ENCODE measurements at regions of chr5 and their contacts with region 1.

Region 1: DNA sequence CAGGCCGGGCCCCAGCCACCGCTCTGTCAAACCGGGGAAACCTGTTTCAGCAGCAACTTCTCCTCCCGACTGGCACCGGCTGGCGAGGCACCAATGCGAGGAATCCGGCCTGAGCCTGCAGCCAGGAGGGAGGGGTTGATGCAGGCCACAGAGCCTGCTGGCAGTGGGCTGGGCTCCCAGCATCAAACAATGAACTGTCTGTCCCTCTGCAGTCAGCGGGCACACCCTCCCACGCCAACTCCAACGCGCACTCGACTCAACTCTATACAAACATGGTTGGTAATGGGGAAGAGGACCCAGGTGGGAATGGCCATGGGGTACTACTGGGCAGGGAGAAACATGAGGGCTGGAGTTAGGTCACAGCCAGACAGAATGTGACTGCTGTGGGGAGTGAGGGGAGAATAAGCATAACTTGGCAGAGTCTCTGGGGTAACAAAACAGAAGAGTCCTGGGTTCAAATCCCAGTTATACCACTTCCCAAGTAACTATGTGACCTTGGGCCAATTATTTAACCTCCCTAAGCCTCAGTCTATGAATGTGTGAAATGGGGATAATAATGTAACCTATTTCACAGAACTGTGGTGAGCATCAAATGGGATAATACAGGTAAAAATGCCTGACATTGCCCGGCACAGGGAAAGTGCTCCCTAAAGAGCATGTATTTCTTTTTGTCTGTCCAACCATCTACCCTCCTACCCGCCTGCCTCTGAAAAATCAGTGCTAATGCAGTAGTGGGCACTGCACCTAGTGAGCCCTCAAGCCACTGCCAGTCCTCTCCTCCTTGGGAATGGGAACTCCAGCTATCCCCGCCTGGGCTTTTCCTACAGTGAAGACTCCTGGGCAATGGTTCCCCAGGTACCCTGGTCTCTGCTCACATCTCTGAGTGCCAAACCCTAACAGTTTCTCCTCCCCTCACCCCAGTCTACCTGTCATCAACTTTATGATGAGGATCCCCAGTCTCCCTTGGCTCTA is 11.8 kb downstream of the PCDH1 start:
- DNase-seq: peak; percentile 93
- ATAC-seq: peak; percentile 89
- H3K4me3 ChIP-seq: no peak overlapping the region
- H3K27ac ChIP-seq: peak overlapping the region; percentile 95
- H3K4me1 ChIP-seq: peaks cover 40% of the 10 kb centered on the region
- H3K27me3 ChIP-seq: no peaks in the 10 kb centered on the region
- CTCF ChIP-seq: no peak

Region 2: DNA sequence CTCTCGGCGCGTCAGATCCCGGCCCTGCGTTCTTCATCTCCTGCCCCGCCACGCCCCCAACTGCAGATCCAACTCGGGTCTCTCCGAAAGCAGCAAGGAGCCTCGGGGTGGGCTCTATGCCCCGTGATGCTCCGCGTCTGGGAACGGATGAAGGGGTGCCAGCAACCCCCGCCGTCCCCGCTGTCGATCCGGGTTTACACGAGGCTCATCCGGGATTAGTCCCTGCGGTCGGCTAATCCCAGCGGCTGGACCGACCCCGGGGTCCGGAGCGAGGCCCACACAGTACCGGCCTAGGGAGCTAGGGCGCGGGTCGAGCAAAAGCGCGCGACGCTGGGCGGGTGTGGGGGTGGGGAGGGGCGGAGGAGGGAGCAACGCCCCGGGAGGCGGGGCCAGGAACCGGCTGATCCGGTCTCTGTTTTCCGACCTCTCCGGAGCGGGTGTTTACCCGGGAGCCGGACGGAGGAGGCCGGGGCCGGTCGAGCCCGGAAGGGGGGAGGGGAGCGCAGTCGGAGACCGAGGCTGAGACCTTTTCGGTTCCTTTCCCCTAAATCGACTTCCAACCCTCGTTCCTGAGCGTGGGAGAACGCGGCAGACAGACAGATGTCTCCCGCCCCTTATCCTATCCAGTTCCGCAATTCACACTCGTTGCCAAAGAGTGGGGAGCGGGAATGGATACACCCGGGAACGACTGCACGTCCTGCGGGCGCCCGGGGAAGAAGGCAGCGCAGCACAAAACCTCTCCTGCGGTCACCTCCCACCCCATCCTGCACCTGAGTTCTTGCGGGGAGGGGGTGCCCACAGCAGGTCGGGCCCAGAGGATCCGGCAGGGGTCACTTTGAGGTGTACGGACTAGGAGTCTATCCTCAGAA is 16.8 kb before region 1 on chr5:
- CTCF ChIA-PET with region 1: no interaction called
- POLR2A ChIA-PET with region 1: no interaction called
- intact Hi-C with region 1: loop called (anchors 2 kb)
- DNase-seq: peak; percentile 87
- ATAC-seq: peak; percentile 72
- H3K4me3 ChIP-seq: peak overlapping the region; percentile 72
- H3K27ac ChIP-seq: peak overlapping the region; percentile 100
- H3K4me1 ChIP-seq: peaks cover 21% of the 10 kb centered on the region
- H3K27me3 ChIP-seq: no peaks in the 10 kb centered on the region
- CTCF ChIP-seq: no peak

Region 3: DNA sequence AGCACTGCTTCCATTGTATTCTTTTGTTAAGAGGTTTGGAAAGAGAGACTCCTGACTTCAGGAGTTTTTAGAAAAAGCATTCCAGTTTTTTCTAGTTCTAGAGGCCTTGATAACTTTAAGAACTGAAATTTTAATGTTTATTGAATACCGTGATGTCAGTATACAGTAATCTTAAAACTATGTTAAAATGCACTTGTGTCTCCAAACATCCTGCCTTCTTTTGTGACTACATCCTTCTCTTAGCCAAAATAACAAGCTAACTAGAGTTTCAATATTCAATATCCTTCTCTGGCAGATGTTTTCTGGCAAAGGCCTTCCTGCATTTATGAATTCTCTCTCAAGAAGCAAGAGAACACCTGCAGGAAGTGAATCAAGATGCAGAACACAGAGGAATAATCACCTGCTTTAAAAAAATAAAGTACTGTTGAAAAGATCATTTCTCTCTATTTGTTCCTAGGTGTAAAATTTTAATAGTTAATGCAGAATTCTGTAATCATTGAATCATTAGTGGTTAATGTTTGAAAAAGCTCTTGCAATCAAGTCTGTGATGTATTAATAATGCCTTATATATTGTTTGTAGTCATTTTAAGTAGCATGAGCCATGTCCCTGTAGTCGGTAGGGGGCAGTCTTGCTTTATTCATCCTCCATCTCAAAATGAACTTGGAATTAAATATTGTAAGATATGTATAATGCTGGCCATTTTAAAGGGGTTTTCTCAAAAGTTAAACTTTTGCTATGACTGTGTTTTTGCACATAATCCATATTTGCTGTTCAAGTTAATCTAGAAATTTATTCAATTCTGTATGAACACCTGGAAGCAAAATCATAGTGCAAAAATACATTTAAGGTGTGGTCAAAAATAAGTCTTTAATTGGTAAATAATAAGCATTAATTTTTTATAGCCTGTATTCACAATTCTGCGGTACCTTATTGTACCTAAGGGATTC is 285.3 kb after region 1 on chr5:
- CTCF ChIA-PET with region 1: no interaction called
- POLR2A ChIA-PET with region 1: no interaction called
- intact Hi-C with region 1: no loop called
- DNase-seq: peak; percentile 64
- ATAC-seq: peak; percentile 70
- H3K4me3 ChIP-seq: no peak overlapping the region
- H3K27ac ChIP-seq: no peak overlapping the region
- H3K4me1 ChIP-seq: peaks cover 13% of the 10 kb centered on the region
- H3K27me3 ChIP-seq: no peaks in the 10 kb centered on the region
- CTCF ChIP-seq: peak; percentile 87